Psoas muscle (tissue), 8 donors: ENCODE measurements at regions of chr9 and their contacts with region 1.

Region 1: GRCh38 chr9:18294229-18294628 is 179.7 kb upstream of the ADAMTSL1 start:
- DNase-seq: no peak
- ATAC-seq: no peak
- H3K4me3 ChIP-seq: no peak overlapping the region
- H3K27ac ChIP-seq: no peak overlapping the region
- H3K4me1 ChIP-seq: no peaks in the 10 kb centered on the region
- H3K27me3 ChIP-seq: no peaks in the 10 kb centered on the region
- CTCF ChIP-seq: no peak

Region 2: GRCh38 chr9:18240213-18240612 is 54.0 kb before region 1 on chr9:
- intact Hi-C with region 1: loop called in 1 of 2 experiments (anchors 5 kb)
- DNase-seq: no peak
- ATAC-seq: no peak
- H3K4me3 ChIP-seq: no peak overlapping the region
- H3K27ac ChIP-seq: no peak overlapping the region
- H3K4me1 ChIP-seq: no peaks in the 10 kb centered on the region
- H3K27me3 ChIP-seq: no peaks in the 10 kb centered on the region
- CTCF ChIP-seq: no peak

Region 3: DNA sequence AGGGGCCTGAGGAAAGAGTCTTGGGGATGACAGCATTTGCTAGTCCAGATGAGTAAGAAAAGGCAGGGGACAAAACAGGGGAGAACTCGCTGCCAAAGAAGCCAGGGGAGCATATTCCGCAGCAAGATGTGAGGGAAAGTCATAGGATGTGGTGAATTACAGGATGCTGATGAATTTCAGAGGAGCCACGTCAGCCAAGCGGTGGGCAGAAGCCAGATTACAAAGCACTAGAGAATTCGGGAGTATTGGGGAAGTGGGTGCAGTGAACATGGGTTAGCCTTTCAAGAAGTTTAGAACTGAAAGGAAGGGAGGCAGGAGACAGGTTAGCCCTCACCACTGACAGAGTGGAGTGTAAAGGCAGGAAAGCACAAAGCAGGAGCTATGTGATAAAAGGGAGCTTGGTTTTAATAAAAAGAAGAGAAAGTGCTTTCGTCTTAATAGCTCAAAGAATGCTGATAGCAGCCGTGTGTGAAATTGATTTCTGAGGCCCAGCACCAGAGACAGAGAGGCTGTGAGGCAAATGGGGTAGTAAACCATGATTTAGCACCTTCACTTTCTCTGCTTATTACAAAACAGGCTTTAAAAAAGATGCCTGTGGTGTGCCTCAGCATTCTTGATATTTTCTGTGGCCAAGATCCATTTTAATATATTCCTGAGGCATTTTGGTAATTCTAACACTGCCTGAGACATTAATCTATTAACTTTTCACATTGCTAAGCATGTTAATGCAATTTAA is 196.6 kb after region 1 on chr9:
- intact Hi-C with region 1: no loop called
- DNase-seq: peak in 1 of 2 donors; percentile 40
- ATAC-seq: peak in 2 of 4 donors; percentile 24 to 51
- H3K4me3 ChIP-seq: no peak overlapping the region
- H3K27ac ChIP-seq: peak overlapping the region; percentile 23
- H3K4me1 ChIP-seq: no peaks in the 10 kb centered on the region
- H3K27me3 ChIP-seq: peaks cover 0 to 2% (median 0%) of the 10 kb centered on the region in 3 donors
- CTCF ChIP-seq: no peak

Region 4: DNA sequence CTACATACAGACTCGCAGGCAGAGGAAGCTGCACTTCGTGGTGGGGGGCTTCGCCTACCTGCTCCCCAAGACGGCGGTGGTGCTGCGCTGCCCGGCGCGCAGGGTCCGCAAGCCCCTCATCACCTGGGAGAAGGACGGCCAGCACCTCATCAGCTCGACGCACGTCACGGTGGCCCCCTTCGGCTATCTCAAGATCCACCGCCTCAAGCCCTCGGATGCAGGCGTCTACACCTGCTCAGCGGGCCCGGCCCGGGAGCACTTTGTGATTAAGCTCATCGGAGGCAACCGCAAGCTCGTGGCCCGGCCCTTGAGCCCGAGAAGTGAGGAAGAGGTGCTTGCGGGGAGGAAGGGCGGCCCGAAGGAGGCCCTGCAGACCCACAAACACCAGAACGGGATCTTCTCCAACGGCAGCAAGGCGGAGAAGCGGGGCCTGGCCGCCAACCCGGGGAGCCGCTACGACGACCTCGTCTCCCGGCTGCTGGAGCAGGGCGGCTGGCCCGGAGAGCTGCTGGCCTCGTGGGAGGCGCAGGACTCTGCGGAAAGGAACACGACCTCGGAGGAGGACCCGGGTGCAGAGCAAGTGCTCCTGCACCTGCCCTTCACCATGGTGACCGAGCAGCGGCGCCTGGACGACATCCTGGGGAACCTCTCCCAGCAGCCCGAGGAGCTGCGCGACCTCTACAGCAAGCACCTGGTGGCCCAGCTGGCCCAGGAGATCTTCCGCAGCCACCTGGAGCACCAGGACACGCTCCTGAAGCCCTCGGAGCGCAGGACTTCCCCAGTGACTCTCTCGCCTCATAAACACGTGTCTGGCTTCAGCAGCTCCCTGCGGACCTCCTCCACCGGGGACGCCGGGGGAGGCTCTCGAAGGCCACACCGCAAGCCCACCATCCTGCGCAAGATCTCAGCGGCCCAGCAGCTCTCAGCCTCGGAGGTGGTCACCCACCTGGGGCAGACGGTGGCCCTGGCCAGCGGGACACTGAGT is 482.9 kb after region 1 on chr9:
- intact Hi-C with region 1: no loop called
- DNase-seq: peak in 1 of 2 donors; percentile 49
- ATAC-seq: no peak
- H3K4me3 ChIP-seq: no peak overlapping the region
- H3K27ac ChIP-seq: no peak overlapping the region
- H3K4me1 ChIP-seq: no peaks in the 10 kb centered on the region
- H3K27me3 ChIP-seq: no peaks in the 10 kb centered on the region
- CTCF ChIP-seq: no peak